Heart left ventricle (tissue), 16 donors: ENCODE measurements at regions of chr21 and their contacts with region 1.

Region 1: DNA sequence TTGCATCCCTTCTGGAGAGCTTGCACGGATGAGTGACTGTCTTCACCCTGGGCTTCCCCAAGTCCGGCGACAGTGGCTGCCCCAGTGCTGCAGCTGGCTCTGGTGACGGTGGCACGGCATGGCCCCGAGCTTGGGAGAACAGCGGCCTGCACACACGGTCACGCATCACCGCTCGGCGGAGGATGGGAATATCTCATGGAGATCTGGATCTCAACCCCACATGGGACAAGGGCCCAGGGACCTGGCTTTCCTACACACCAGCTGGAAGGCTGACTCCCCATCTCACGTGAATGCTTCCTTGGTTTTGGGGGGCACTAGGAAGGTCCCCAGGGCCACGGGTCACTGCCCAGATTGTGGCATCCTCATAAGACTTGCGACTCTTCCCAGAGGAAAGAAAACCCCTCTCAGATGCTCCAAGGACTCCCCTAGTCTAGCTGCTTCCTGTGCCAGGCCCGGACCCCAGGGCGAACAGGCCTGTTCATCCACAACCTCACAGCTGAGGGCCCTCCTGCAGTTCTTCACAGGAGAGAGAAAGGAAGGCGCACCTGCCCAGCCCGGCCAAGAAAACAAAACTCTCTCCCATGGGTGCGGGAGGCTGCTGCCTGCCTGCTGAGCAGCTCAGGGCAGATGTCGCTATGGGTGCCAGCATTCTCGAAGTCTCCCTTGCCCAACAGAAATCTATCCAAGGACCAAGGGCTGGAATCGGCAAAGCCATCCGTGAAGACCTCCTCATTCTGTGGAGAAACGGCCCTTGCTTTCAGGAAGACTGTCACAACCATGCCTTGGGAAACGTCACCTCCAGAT is 9.9 kb downstream of the CFAP410 start:
- DNase-seq: no peak
- ATAC-seq: no peak
- H3K4me3 ChIP-seq: no peak overlapping the region
- H3K27ac ChIP-seq: no peak overlapping the region
- H3K4me1 ChIP-seq: no peaks in the 10 kb centered on the region
- H3K27me3 ChIP-seq: no peaks in the 10 kb centered on the region
- CTCF ChIP-seq: no peak
- POLR2A ChIP-seq: no peak

Region 2: GRCh38 chr21:44379991-44380908 is 51.0 kb after region 1 on chr21:
- intact Hi-C with region 1: loop called in 1 of 10 experiments (anchors 10 kb)
- DNase-seq: peak in 1 of 5 donors; percentile 2
- ATAC-seq: no peak
- H3K4me3 ChIP-seq: no peak overlapping the region
- H3K27ac ChIP-seq: no peak overlapping the region
- H3K4me1 ChIP-seq: peaks cover 0 to 6% (median 0%) of the 10 kb centered on the region in 12 donors
- H3K27me3 ChIP-seq: peaks cover 0 to 30% (median 5%) of the 10 kb centered on the region in 9 donors
- CTCF ChIP-seq: no peak
- POLR2A ChIP-seq: no peak